GM12878 (cell line): ENCODE measurements at regions of chr13 and their contacts with region 1.

Region 1: GRCh38 chr13:104975272-104975671 is 1560.2 kb downstream of the EFNB2 start:
- DNase-seq: no peak
- ATAC-seq: peak; percentile 78
- H3K4me3 ChIP-seq: no peak overlapping the region
- H3K27ac ChIP-seq: peak overlapping the region; percentile 63
- H3K4me1 ChIP-seq: peaks cover 15% of the 10 kb centered on the region
- H3K27me3 ChIP-seq: no peaks in the 10 kb centered on the region
- CTCF ChIP-seq: no peak
- EP300 ChIP-seq: no peak
- POLR2A ChIP-seq: no peak
- RAD21 ChIP-seq: peak; percentile 15; the same call in 1 of the 2 replicates

Region 2: DNA sequence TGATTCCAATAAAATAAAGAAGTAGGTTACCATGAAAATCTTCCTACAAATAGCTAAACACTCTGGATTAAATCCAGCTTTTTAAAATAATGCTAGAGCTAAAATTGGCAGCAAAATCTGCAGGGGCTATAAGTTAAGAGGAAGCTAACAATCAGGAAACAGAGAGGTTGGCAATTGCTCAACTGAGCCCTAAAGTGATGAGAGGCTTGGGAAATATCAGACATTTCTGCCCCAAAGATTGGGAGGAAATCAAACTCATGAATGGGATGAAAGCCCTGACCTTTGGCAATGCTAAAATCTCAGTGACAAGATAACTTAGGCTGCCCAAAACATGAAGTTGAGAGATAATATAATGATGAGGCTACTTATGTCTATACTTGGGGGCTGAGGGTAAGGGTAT is 122.2 kb after region 1 on chr13:
- CTCF ChIA-PET with region 1: no interaction called
- POLR2A ChIA-PET with region 1: no interaction called
- RAD21 ChIA-PET with region 1: no interaction called
- SMC1A ChIA-PET with region 1: no interaction called
- in situ Hi-C with region 1: no loop called
- intact Hi-C with region 1: no loop called
- DNase-seq: no peak
- ATAC-seq: no peak
- H3K4me3 ChIP-seq: no peak overlapping the region
- H3K27ac ChIP-seq: no peak overlapping the region
- H3K4me1 ChIP-seq: no peaks in the 10 kb centered on the region
- H3K27me3 ChIP-seq: no peaks in the 10 kb centered on the region
- CTCF ChIP-seq: no peak
- EP300 ChIP-seq: no peak
- POLR2A ChIP-seq: no peak
- RAD21 ChIP-seq: no peak

Region 3: DNA sequence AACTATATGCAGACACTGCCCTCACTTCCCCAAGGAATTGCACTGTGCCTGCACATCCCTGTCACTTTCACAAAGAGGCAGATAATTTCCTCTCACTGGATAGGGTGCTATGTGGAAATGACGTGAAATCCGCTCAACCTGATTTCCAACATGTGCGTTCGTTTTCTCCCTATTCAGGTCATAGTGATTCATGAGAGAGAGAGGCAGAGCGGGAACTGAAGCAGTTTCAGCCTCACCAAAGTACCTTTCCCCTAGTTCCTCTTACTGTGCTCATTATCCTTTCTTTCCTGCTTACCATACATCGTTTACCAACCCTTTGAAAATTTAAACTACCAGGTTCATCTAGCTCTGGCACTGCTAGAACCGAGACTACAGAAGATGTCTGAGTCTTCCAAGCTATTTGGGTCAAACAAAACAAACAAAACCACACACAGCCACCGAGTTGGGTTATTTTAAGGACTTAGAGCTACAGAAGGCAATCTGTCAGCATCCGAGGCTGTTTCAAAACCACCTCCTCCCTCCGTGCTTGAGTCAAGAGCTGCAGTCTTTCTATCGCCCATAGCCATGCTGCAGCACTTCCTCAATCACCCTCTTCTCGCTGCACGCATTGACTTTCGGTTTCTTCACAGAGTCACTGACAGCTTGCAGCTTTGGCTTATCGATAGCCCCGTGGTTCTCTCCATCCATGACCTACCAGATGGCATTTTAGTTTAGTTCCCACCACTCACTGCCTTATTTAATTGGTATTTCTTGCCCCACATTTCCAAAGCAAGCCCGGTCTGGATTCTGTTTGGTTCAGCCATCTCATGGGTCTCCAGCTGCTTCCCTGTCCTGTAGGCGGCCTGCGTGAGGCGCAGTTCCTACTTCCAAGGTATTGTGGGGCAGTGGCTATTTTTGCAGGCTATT is 164.4 kb after region 1 on chr13:
- CTCF ChIA-PET with region 1: no interaction called
- POLR2A ChIA-PET with region 1: no interaction called
- RAD21 ChIA-PET with region 1: no interaction called
- SMC1A ChIA-PET with region 1: no interaction called
- in situ Hi-C with region 1: no loop called
- intact Hi-C with region 1: loop called (anchors 5 kb)
- DNase-seq: peak; percentile 87
- ATAC-seq: peak; percentile 98
- H3K4me3 ChIP-seq: peak overlapping the region; percentile 60
- H3K27ac ChIP-seq: peak overlapping the region; percentile 92
- H3K4me1 ChIP-seq: peaks cover 10% of the 10 kb centered on the region; the same call in 1 of the 2 replicates
- H3K27me3 ChIP-seq: no peaks in the 10 kb centered on the region
- CTCF ChIP-seq: peak; percentile 31 to 52 (median 50)
- EP300 ChIP-seq: 0 out of 4 replicates have a peak, but pooled peaks of 1 of the 2 experiments have one; percentile 37
- POLR2A ChIP-seq: peak; percentile 85
- RAD21 ChIP-seq: peak; percentile 56